CD4-positive, alpha-beta T cell (primary cell): ENCODE measurements at regions of chr2 and their contacts with region 1.

Region 1: DNA sequence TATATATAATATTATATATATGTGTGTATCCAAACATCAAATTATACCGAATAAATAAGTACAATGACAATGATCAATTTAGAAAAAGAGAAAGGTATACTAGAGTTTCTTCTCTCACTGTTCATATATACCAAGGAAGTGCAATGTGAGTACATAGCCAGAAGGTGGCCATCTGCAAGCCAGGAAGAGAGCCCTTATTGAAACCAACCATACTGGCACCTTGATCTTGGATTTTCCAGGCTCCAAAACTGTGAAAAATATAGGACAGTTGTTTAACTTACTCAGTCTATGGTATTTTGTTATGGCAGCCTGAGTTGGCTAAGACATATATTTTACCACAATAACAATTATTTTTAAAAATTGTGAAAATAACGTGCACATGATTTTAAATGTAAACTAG is 1490.2 kb upstream of the SLC39A10 start:
- DNase-seq: peak in 3 of 14 experiments; percentile 11 to 22 (median 21)
- ATAC-seq: no peak
- H3K4me3 ChIP-seq: no peak overlapping the region
- H3K4me3 Mint-ChIP-seq: no peak overlapping the region
- H3K27ac ChIP-seq: no peak overlapping the region
- H3K27ac Mint-ChIP-seq: no peak overlapping the region
- H3K4me1 ChIP-seq: no peaks in the 10 kb centered on the region
- H3K4me1 Mint-ChIP-seq: no peaks in the 10 kb centered on the region
- H3K27me3 ChIP-seq: no peaks in the 10 kb centered on the region
- H3K27me3 Mint-ChIP-seq: peaks cover 5% of the 10 kb centered on the region
- CTCF ChIP-seq: peak; percentile 38

Region 2: DNA sequence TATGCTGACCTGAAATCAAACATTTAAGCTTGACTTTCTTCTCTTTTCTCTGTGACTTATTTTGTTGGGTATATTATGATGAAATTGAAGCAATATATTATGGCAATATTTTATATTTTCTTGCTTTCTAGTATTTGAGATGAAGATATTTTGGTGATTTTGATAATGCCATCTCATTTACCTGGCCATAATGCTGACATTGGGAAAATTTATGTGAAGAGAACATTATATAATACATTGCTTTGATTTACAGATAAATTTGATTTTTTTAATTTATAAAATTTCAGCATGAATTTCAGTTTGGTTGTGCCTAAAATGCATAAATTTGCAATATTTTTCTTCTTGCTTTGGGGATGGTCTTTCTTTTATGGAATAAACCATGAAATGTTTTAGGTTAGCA is 558.4 kb before region 1 on chr2:
- CTCF ChIA-PET with region 1: no interaction called
- POLR2A ChIA-PET with region 1: no interaction called
- intact Hi-C with region 1: no loop called
- DNase-seq: no peak
- ATAC-seq: no peak
- H3K4me3 ChIP-seq: no peak overlapping the region
- H3K4me3 Mint-ChIP-seq: no peak overlapping the region
- H3K27ac ChIP-seq: no peak overlapping the region
- H3K27ac Mint-ChIP-seq: no peak overlapping the region
- H3K4me1 ChIP-seq: no peaks in the 10 kb centered on the region
- H3K4me1 Mint-ChIP-seq: no peaks in the 10 kb centered on the region
- H3K27me3 ChIP-seq: no peaks in the 10 kb centered on the region
- H3K27me3 Mint-ChIP-seq: no peaks in the 10 kb centered on the region
- CTCF ChIP-seq: no peak

Region 3: GRCh38 chr2:194128810-194129209 is 38.0 kb before region 1 on chr2:
- CTCF ChIA-PET with region 1: no interaction called
- POLR2A ChIA-PET with region 1: no interaction called
- intact Hi-C with region 1: no loop called
- DNase-seq: no peak
- ATAC-seq: no peak
- H3K4me3 ChIP-seq: no peak overlapping the region
- H3K4me3 Mint-ChIP-seq: no peak overlapping the region
- H3K27ac ChIP-seq: no peak overlapping the region
- H3K27ac Mint-ChIP-seq: no peak overlapping the region
- H3K4me1 ChIP-seq: no peaks in the 10 kb centered on the region
- H3K4me1 Mint-ChIP-seq: no peaks in the 10 kb centered on the region
- H3K27me3 ChIP-seq: no peaks in the 10 kb centered on the region
- H3K27me3 Mint-ChIP-seq: no peaks in the 10 kb centered on the region
- CTCF ChIP-seq: no peak

Region 4: GRCh38 chr2:195318440-195319111 is 1151.8 kb after region 1 on chr2:
- CTCF ChIA-PET with region 1: no interaction called
- POLR2A ChIA-PET with region 1: no interaction called
- intact Hi-C with region 1: loop called in 1 of 2 experiments (anchors 5 kb)
- DNase-seq: peak in 13 of 14 experiments; percentile 11 to 70 (median 33)
- ATAC-seq: no peak
- H3K4me3 ChIP-seq: no peak overlapping the region
- H3K4me3 Mint-ChIP-seq: no peak overlapping the region
- H3K27ac ChIP-seq: no peak overlapping the region
- H3K27ac Mint-ChIP-seq: no peak overlapping the region
- H3K4me1 ChIP-seq: no peaks in the 10 kb centered on the region
- H3K4me1 Mint-ChIP-seq: peaks cover 7% of the 10 kb centered on the region
- H3K27me3 ChIP-seq: no peaks in the 10 kb centered on the region
- H3K27me3 Mint-ChIP-seq: no peaks in the 10 kb centered on the region
- CTCF ChIP-seq: peak; percentile 72